ENCODE measurements at regions of chr12 and their contacts with region 1.

Region 1: DNA sequence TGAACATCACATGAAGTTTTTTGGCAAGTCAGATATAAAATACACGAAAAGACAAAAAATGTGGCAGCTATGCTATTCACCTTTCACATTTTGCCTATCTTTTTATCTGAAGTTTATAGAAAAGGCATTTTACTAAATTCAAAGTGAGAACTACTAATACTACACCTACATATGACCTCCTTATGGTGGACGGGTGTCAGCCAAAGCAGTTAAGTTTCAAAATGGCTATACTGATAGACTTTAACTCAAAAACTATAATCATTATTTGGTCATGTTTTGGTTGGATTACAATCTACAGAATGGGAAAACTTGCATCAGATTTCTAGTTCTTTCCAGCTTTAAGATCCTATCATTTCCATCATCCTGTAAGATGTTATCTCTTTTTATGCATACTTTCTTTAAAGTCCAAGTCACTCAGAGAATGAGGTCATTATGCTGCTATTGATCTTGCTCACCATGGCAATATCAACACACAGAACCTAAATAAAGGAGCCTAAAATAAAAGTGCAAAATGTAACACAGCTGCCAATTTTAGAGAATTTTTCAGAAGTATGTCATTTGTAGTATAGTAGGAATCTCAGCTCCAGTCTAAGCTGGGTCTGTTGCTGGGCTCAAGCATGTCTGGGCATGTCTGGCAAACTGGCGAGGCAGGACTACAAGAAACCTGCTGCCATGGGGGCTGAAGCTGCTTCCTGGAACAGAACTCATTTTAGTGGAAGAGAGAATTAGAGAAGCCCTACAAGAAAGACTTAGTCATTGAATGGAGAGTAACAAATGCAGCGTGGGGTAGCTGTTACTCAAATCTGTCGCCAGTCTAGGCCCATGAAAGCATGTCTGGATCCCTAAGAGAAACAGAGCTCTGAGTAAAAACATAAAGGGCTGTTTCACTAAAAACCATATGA is 7.6 kb upstream of the AEBP2 start:
- DNase-seq: peak; percentile 72
- ATAC-seq: peak; percentile 92
- H3K4me3 Mint-ChIP-seq: no peak overlapping the region
- H3K27ac Mint-ChIP-seq: peak overlapping the region; percentile 88
- H3K4me1 Mint-ChIP-seq: peaks cover 29% of the 10 kb centered on the region
- H3K27me3 Mint-ChIP-seq: peaks cover 2% of the 10 kb centered on the region

Region 2: DNA sequence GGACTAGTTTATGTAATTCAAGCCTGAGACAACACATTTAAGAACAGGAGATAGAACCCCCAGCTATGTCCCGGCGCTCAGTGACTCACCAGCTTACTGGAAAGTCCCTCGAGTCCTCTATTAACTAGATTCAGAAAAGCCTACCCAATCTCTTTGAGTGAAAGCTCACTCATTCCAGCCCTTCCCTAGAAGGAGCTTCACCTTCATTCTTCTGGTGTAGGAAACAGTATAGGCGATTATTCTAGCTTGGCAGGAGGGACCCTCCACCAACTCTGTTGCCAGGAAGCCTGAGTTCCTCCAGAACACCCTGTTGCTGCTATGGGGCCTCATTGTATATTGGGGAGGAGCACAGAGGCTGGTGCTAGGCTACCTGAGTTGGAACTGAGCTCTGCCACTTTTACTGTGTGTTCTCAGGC is 49.5 kb before region 1 on chr12:
- CTCF ChIA-PET with region 1: no interaction called
- POLR2A ChIA-PET with region 1: no interaction called
- intact Hi-C with region 1: loop called (anchors 1 to 5 kb)
- DNase-seq: peak; percentile 77
- ATAC-seq: peak; percentile 97
- H3K4me3 Mint-ChIP-seq: no peak overlapping the region
- H3K27ac Mint-ChIP-seq: no peak overlapping the region
- H3K4me1 Mint-ChIP-seq: peaks cover 16% of the 10 kb centered on the region
- H3K27me3 Mint-ChIP-seq: no peaks in the 10 kb centered on the region

Region 3: DNA sequence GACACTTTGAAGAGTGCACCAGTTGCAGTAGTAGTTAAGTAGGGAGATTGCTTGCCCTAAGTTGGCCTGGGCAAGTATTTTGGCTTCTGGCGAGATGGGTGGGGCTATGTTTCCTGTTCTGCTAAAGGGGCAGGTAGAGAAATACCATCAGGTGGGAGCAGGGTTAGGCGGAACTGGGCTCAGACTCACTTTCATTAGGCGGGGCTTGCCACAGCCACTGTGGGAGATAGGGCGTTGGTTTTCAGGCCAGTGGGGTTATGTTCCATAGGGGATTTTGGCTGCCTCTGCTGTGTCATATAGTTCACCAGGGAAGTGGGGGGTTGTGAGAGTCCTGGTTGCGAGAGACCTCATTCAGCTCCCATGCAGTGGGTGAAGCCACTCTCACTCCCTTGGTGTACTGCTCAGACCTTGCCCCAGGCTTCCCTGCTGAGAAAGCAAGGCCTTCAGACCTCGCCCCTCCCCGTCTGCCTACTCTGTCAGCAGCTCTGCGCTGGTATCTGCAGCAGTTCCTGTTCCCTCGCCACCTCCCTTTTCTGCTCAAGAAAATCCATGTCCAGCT is 51.0 kb after region 1 on chr12:
- CTCF ChIA-PET with region 1: no interaction called
- POLR2A ChIA-PET with region 1: no interaction called
- intact Hi-C with region 1: loop called in 1 of 2 experiments (anchors 2 kb)
- DNase-seq: peak; percentile 78
- ATAC-seq: peak; percentile 90
- H3K4me3 Mint-ChIP-seq: peak overlapping the region; percentile 14
- H3K27ac Mint-ChIP-seq: peak overlapping the region; percentile 83
- H3K4me1 Mint-ChIP-seq: peaks cover 58% of the 10 kb centered on the region
- H3K27me3 Mint-ChIP-seq: no peaks in the 10 kb centered on the region

Region 4: GRCh38 chr12:19547271-19547671 is 115.6 kb after region 1 on chr12:
- CTCF ChIA-PET with region 1: no interaction called
- POLR2A ChIA-PET with region 1: no interaction called
- intact Hi-C with region 1: loop called (anchors 1 to 2 kb)
- DNase-seq: no peak
- ATAC-seq: no peak
- H3K4me3 Mint-ChIP-seq: no peak overlapping the region
- H3K27ac Mint-ChIP-seq: no peak overlapping the region
- H3K4me1 Mint-ChIP-seq: peaks cover 8% of the 10 kb centered on the region
- H3K27me3 Mint-ChIP-seq: no peaks in the 10 kb centered on the region

Region 5: DNA sequence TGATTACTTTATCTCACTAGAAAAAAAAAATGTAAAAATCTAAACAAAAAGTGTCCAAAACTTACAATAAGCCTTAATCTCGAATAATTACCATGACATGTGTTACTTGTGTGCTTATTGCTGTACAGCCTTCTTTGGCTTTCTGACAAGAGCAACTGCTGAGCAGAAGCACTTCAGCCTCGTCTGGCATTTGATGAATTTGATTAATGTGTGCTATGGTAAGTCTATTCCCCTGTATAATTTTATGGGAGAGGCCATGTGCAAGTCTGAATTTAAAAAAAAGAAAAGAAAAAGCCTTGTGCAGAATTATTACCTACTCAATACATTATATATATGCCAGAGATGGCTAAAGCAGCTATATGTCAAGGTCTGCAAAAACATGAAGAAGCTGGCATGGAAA is 121.5 kb after region 1 on chr12:
- CTCF ChIA-PET with region 1: no interaction called
- POLR2A ChIA-PET with region 1: no interaction called
- intact Hi-C with region 1: loop called (anchors 1 to 2 kb)
- DNase-seq: no peak
- ATAC-seq: no peak
- H3K4me3 Mint-ChIP-seq: peak overlapping the region; percentile 52
- H3K27ac Mint-ChIP-seq: no peak overlapping the region
- H3K4me1 Mint-ChIP-seq: peaks cover 16% of the 10 kb centered on the region
- H3K27me3 Mint-ChIP-seq: no peaks in the 10 kb centered on the region

Region 6: DNA sequence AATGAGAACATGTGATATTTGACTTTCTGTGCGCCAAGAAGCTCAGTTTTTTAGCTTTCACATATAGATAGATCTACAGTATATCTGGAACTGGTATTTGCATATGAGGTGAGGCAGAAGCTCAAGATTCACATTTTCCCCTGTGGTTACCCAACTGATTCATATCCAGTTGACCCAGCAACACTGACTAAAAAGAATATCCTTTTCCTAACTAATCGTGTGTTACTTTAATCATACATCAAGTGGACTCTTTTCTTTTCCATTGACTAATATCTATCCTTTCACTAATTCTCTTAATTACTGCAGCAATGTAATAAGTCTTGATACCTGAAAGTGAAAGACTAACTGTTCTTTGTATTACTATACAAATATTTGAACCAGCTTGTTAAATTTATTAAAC is 243.7 kb after region 1 on chr12:
- CTCF ChIA-PET with region 1: no interaction called
- POLR2A ChIA-PET with region 1: no interaction called
- intact Hi-C with region 1: loop called (anchors 2 to 5 kb)
- DNase-seq: no peak
- ATAC-seq: peak; percentile 89
- H3K4me3 Mint-ChIP-seq: no peak overlapping the region
- H3K27ac Mint-ChIP-seq: no peak overlapping the region
- H3K4me1 Mint-ChIP-seq: peaks cover 24% of the 10 kb centered on the region
- H3K27me3 Mint-ChIP-seq: no peaks in the 10 kb centered on the region

Region 7: DNA sequence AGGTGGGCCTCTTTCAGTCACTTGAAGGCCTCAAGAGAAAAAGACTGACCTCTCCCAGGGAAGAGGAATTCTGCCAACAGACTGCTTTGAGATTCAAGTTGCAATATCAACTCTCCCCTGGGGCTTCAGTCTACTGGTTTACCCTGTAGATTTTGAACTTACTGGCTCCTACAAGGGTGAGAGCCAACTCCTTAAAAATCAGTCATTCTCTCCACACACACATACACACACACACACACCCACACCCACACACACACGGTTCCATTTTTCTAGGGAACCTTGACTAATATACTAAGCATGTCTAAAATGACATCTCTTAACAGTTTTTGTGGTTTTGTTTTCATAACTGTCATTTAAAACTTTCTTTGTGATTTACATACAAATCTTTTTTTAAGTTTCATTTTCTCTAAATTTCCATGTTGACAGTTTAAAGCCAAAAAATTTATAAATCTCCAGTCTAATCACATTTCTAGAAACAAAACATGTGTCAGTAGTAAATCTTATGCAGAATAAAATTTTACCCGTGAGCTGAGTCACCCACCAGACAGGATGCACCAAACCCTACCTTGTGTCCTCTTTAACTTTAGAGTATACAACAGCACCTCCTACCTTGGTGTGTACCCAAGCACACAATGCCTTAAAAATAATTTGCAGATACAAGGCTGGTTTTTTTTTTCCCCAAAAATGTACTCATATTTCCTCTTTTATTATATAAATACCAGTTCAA is 402.3 kb after region 1 on chr12:
- CTCF ChIA-PET with region 1: no interaction called
- POLR2A ChIA-PET with region 1: no interaction called
- intact Hi-C with region 1: loop called in 1 of 2 experiments (anchors 5 kb)
- DNase-seq: peak; percentile 63
- ATAC-seq: peak; percentile 92
- H3K4me3 Mint-ChIP-seq: no peak overlapping the region
- H3K27ac Mint-ChIP-seq: peak overlapping the region; percentile 10
- H3K4me1 Mint-ChIP-seq: peaks cover 28% of the 10 kb centered on the region
- H3K27me3 Mint-ChIP-seq: no peaks in the 10 kb centered on the region

Region 8: DNA sequence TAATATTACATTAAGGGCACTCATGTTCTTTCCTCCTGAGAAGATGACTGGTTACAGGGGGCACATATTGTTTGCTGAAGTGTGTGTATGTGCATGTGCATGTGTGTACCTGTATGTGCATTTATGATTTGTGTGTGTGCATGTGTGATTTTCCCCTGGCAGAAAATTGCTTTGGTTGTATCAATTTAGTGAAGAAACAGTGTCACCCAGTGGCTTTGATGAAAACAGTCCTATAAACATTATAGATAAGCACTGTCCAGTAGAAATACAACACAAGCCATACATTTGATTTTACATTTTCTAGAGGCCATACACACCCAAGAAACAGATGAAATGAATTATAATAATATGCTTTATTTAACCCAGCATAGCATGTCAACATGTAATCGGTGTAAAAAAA is 945.3 kb after region 1 on chr12:
- CTCF ChIA-PET with region 1: no interaction called
- POLR2A ChIA-PET with region 1: no interaction called
- intact Hi-C with region 1: no loop called
- DNase-seq: no peak
- ATAC-seq: no peak
- H3K4me3 Mint-ChIP-seq: no peak overlapping the region
- H3K27ac Mint-ChIP-seq: no peak overlapping the region
- H3K4me1 Mint-ChIP-seq: no peaks in the 10 kb centered on the region
- H3K27me3 Mint-ChIP-seq: peaks cover 7% of the 10 kb centered on the region

Measured in activated CD4-positive, alpha-beta T cell treated with anti-CD3 and anti-CD28 coated beads for 36 hours (primary cell).